ENCODE measurements at regions of chr1 and their contacts with region 1.

Region 1: DNA sequence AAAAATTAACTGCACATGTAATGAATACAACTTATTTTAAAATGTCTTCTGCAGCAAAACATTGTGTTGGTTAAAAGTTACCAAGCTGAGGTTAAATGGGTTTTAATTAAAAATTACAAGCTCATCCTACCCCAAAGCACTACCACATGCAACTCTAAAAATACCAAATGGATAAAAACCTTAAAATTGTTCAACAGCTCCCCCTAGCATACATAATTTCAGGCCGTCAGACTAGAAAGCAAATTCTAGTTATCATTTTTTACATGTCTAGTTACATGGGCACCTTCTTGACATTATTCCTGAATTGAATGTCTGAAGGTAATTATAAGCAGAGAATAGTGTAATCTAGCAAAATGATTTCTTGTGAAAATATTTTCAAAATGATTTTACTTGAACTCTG is 176.5 kb downstream of the C1orf21 start:
- DNase-seq: no peak
- ATAC-seq: peak; percentile 62
- H3K4me3 ChIP-seq: no peak overlapping the region
- H3K27ac ChIP-seq: no peak overlapping the region
- H3K4me1 ChIP-seq: peaks cover 10 to 13% of the 10 kb centered on the region in 2 donors
- H3K27me3 ChIP-seq: no peaks in the 10 kb centered on the region
- CTCF ChIP-seq: peak in 1 of 2 donors; percentile 43

Region 2: DNA sequence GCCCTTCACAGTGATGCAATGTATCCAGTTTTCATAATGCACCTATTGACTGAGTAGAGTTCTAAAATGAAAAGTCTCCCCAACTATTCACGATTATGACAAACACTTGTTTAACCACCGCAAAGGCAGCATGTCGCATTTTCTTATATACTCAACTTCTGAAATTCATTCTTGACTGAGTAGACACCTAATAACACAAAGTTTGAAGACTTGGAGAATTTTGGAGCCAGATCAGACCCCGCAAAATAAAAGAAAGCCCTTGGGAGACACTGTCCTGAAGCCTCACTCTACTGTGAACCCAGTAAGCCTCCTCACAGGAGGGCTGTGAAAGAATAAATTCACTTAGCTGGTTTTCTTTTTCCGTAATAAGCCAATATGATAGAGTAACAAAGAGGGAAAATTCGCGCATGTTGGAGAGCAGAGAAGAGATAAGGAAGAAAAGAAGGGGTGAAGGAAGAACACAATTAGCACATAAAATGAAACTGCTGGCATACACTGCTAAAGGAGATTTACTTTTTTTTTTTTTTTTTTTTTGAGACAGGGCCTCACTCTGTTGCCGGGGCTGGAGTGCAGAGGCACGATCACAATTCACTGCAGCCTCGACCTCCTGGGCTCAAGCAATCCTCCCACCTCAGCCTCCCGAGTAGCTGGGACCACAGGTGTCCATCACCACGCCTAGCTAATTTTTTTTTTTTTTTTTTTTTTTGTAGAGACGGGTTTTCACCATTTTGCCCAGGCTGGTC is 525.3 kb before region 1 on chr1:
- intact Hi-C with region 1: no loop called
- DNase-seq: no peak
- ATAC-seq: no peak
- H3K4me3 ChIP-seq: no peak overlapping the region
- H3K27ac ChIP-seq: no peak overlapping the region
- H3K4me1 ChIP-seq: peaks cover 0 to 20% of the 10 kb centered on the region in 2 donors
- H3K27me3 ChIP-seq: peaks cover 13 to 44% of the 10 kb centered on the region in 2 donors
- CTCF ChIP-seq: no peak

Region 3: DNA sequence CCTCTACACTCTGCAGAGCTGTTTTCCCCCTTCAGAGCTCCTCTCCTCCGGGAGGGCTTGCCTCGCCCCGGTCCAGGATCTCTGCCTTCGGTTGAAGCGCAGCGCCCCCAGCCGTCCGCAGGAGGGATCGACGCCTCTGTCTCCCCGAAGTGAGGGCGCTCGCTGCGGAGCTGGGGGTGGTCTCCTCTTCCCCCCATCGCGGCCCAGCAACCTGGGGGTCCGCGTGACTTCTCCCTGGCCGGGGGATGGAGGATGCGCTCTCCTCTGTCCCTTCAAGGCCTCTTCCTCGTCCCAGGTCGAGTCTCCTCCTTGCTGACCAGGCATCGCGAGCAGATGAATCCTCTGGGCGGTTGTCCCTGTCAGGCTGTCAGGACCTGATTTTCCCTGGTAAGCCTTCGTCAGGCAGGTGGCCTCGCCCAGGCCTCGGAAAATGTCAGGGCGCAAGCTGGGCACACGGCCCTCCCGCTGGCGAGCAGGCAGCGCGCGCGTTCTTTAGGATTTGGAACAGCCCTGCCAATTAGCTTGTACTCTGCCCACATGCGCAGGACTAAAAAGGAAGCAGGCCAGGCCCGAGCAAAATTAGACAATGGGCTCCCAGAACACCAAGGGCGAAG is 100.8 kb after region 1 on chr1:
- intact Hi-C with region 1: loop called in 1 of 2 experiments (anchors 10 kb)
- DNase-seq: peak; percentile 66 to 90 (median 82)
- ATAC-seq: peak; percentile 98
- H3K4me3 ChIP-seq: peak overlapping the region; percentile 15 to 16
- H3K27ac ChIP-seq: no peak overlapping the region
- H3K4me1 ChIP-seq: peaks cover 0 to 10% of the 10 kb centered on the region in 2 donors
- H3K27me3 ChIP-seq: peaks cover 0 to 11% of the 10 kb centered on the region in 2 donors
- CTCF ChIP-seq: peak; percentile 82 to 84

Region 4: DNA sequence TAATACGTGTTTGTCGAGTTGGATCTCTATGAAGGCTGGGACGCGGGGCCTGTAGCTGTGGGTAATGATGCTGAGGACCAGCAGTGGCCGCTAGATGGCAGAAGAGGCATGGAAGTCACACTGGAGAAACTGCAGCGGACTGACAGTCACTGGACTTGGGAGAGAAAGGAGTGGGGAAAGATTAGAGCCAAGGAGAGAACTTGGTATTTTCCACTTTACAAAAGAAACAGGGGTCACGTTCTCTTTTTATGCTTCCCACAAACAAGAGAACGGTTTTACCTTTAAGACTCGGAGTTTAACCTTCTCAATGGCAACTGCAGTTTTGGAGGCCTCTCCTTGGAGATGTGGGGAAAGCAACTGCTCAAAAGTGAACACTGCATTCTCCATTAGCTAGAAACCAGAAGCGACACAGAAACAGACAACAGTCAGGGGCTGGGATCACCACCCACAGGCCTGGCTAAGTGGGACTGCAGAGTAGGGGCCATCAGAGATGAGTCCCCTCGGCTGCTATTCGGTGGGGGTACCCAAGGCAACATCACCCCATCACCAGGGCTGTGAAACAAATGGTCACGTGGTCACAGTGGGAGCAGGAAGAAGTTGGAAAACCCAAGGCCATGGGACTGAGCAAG is 242.5 kb after region 1 on chr1:
- intact Hi-C with region 1: no loop called
- DNase-seq: peak; percentile 82 to 92 (median 90)
- ATAC-seq: peak; percentile 100
- H3K4me3 ChIP-seq: no peak overlapping the region
- H3K27ac ChIP-seq: peak overlapping the region in 1 of 2 donors; percentile 84
- H3K4me1 ChIP-seq: peaks cover 0 to 19% of the 10 kb centered on the region in 2 donors
- H3K27me3 ChIP-seq: no peaks in the 10 kb centered on the region
- CTCF ChIP-seq: peak; percentile 79 to 95